Astrocyte of the cerebellum (primary cell): ENCODE measurements at regions of chr10 and their contacts with region 1.

Region 1: GRCh38 chr10:5764422-5765297 is 48.6 kb downstream of the GDI2 start:
- DNase-seq: no peak
- H3K4me3 ChIP-seq: no peak overlapping the region
- CTCF ChIP-seq: no peak

Region 2: DNA sequence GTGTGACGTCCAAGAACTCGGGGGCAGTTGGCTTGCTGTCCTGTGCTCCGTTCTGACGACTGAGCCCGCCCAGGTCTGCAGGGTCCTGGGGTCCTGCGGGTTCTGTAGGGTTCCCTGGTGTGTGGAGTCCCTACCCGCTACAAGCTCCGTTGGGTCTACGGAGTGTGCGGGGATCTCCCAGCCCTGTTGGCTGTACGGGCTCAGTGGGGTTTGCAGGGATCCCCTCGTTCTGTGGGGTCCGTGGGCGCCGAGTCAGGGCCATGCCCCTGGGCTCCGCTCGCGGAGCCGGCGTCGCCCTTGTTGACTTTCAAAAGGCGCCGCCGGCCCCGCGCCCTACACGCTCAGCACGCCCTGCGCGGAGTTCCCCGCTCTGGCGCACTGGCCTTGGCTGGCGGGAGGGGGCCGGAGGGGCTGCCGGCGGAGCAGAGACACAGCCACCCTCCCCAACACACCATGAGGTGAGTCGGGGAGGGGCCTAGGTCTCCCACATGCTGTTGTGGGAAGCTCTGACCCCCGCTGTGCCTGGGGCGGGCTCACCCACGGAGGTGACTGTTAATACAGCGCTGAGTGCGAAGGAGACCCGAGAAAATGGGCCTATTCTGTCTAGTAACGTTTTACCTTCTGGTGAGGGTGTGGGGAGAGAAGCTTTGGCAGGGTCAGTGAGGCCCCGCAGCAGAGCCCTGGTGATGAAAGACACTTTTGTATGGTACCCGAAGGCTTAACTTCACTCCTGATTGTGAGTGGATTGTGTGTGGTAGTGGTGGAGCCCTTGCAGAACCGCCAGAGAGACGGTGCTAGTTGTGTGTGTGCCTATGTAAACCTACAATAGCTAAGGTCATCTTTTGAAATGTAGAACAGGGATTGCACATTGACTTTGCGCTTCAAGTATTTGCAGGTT is 72.0 kb before region 1 on chr10:
- in situ Hi-C with region 1: loop called (anchors 5 kb)
- DNase-seq: no peak
- H3K4me3 ChIP-seq: peak overlapping the region; percentile 59
- CTCF ChIP-seq: no peak